Activated B cell treated with CpG ODN at 0.5 μM for 24 hours (primary cell): ENCODE measurements at regions of chr14 and their contacts with region 1.

Region 1: GRCh38 chr14:56474419-56475022 is 105.1 kb upstream of the TMEM260 start:
- DNase-seq: no peak
- ATAC-seq: peak; percentile 47
- H3K4me3 Mint-ChIP-seq: no peak overlapping the region
- H3K27ac Mint-ChIP-seq: no peak overlapping the region
- H3K4me1 Mint-ChIP-seq: no peaks in the 10 kb centered on the region
- H3K27me3 Mint-ChIP-seq: no peaks in the 10 kb centered on the region
- CTCF ChIP-seq: peak; percentile 61

Region 2: DNA sequence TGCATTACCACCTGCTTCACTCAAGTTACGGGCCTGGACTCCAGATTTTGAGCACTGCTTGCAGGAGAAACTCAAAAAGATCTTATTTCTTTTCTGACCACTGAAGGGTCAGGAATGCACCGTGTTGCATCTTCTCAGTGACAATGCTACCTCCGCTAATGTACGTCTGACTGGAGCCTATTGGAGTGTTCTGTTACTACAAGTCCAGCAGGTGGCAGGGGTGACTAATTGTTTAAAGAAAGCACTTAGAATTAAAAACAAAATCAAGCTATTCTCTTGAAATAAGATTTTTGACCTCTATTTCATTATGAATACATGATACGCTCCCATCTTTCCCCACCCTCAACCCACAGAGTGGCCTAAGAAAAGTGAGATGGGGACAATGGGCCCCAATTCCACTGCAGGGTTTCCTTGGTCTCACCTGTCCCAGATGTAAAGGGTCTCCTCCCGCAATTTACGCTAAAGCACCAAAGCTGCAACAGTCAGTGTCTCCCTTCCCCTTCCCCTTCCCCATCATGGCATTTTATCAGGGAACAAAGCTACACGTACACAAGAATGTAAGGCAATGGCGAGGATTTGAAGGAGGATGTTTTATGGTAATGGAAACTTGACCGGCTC is 1036.3 kb before region 1 on chr14:
- CTCF ChIA-PET with region 1: interaction called, 3 read pairs
- POLR2A ChIA-PET with region 1: no interaction called
- intact Hi-C with region 1: loop called (anchors 1 kb)
- DNase-seq: no peak
- ATAC-seq: no peak
- H3K4me3 Mint-ChIP-seq: no peak overlapping the region
- H3K27ac Mint-ChIP-seq: no peak overlapping the region
- H3K4me1 Mint-ChIP-seq: peaks cover 7% of the 10 kb centered on the region
- H3K27me3 Mint-ChIP-seq: peaks cover 6% of the 10 kb centered on the region
- CTCF ChIP-seq: no peak

Region 3: GRCh38 chr14:55707365-55707804 is 767.1 kb before region 1 on chr14:
- CTCF ChIA-PET with region 1: interaction called, 5 read pairs
- POLR2A ChIA-PET with region 1: no interaction called
- intact Hi-C with region 1: loop called (anchors 1 kb)
- DNase-seq: no peak
- ATAC-seq: no peak
- H3K4me3 Mint-ChIP-seq: no peak overlapping the region
- H3K27ac Mint-ChIP-seq: no peak overlapping the region
- H3K4me1 Mint-ChIP-seq: peaks cover 3% of the 10 kb centered on the region
- H3K27me3 Mint-ChIP-seq: no peaks in the 10 kb centered on the region
- CTCF ChIP-seq: no peak

Region 4: GRCh38 chr14:55843718-55844403 is 630.7 kb before region 1 on chr14:
- CTCF ChIA-PET with region 1: no interaction called
- POLR2A ChIA-PET with region 1: no interaction called
- intact Hi-C with region 1: loop called (anchors 5 kb)
- DNase-seq: no peak
- ATAC-seq: no peak
- H3K4me3 Mint-ChIP-seq: no peak overlapping the region
- H3K27ac Mint-ChIP-seq: no peak overlapping the region
- H3K4me1 Mint-ChIP-seq: no peaks in the 10 kb centered on the region
- H3K27me3 Mint-ChIP-seq: no peaks in the 10 kb centered on the region
- CTCF ChIP-seq: no peak

Region 5: DNA sequence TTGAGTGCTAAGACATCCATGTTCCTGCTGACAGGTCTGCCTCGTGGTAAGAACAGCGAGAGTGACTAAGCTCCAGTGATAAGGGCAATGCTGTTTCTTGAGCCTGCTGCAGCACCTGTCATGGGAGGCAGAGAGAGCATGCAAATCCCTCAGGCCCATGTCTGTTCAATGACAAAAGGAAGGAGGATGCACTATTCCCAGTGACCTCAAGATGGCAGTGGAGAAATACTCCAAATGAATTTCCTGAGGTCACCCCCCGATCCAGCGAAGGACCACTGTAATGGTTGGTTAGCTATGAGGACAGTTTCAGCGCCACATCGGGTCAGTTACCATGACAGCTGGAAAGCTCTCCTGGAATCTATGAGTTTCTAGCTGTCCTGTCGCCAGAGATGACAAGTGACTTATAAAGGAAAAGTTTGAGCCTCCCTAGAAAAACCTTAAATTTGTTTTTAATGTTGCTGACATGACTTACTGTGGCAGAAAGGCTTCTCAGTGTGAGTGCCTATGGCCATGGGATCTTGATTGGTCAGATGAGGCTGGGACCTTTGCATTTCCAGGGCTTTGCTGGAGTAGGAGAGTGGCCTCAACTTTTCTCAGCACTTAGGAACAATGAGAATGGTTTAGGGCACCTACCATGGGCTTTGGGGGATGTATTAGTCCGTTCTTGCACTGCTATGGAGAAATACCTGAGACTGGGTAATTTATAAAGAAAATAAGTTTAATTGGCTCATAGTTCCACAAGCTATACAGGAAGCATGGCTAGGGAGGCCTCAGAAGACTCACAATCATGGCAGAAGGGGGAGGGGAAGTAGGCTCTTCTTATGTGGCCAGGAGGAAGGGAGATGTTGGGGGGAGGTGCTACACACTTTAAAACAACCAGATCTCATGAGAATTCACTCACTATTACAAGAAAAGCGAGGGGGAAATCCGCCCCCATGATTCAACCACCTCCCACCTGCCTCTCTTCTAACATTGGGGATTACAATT is 17.1 kb after region 1 on chr14:
- CTCF ChIA-PET with region 1: interaction called, 35 read pairs
- POLR2A ChIA-PET with region 1: no interaction called
- intact Hi-C with region 1: no loop called
- DNase-seq: no peak
- ATAC-seq: peak; percentile 61
- H3K4me3 Mint-ChIP-seq: no peak overlapping the region
- H3K27ac Mint-ChIP-seq: no peak overlapping the region
- H3K4me1 Mint-ChIP-seq: peaks cover 4% of the 10 kb centered on the region
- H3K27me3 Mint-ChIP-seq: no peaks in the 10 kb centered on the region
- CTCF ChIP-seq: no peak